Kidney (tissue), 22 donors: ENCODE measurements at regions of chr7 and their contacts with region 1.

Region 1: DNA sequence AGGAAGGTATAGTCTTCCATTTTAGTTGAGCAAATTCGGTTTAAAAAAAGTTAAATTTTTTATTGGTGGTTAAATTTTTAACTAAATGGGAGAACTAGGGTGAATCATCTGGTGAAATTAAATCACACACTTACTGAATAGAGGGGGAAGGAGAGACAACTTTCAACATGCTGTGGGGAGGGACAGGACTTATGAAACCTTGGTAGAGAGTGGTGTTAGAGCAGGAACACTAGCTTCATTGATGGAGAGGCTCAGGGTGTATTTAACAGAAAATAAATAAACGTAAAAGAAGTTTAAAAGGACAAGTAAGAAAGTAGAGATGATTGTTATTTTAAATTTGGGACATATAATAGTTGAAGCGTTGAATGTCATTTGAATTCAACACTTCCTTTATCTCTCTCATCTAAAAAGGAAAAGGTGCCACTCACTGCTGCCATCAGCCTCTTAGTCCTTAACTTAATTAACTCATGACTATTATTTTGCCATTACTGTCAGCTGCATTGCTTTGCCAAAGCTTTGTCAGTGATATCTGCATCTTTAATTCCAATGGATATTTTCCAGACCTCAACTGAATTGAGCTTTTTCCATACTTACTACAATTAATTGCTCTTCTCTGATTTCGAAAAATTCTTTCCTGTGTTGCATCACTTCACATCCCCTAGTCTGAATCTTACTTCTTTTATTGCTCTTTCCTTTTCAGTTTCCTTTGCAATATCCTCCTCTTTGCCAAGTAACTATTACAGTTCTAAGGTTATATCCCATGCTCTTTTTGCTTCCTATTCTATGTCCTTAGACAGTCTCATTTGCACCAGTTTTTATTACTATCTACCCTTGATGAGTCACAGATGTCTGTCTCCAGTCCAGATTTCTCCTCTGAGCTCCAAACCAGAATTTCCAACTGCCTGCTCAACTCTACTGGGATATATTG is 71.7 kb downstream of the GNAT3 start:
- DNase-seq: no peak
- H3K4me3 ChIP-seq: no peak overlapping the region
- H3K27ac ChIP-seq: no peak overlapping the region
- H3K4me1 ChIP-seq: no peaks in the 10 kb centered on the region
- H3K27me3 ChIP-seq: no peaks in the 10 kb centered on the region
- CTCF ChIP-seq: no peak

Region 2: DNA sequence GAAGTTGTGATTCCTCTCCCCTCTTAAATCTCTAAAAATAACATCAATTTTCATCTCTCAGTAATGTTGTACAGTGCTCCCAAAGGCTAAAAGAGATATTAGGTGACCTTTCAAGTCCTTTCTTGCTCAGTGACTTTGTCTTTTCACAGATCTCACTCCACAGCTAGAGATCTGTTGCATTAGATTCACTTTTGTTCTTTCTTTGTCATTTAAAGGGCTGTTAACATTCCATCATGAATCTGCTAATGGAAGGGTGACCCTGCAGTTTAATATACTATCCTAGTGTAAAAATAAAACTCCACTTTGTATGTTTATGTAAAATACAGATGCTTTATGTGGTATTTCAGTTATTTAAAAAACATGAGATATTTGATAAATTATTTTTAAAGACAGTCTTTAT is 275.0 kb before region 1 on chr7:
- intact Hi-C with region 1: no loop called
- DNase-seq: no peak
- H3K4me3 ChIP-seq: no peak overlapping the region
- H3K27ac ChIP-seq: no peak overlapping the region
- H3K4me1 ChIP-seq: peaks cover 0 to 3% (median 0%) of the 10 kb centered on the region in 3 donors
- H3K27me3 ChIP-seq: no peaks in the 10 kb centered on the region
- CTCF ChIP-seq: no peak

Region 3: GRCh38 chr7:80659120-80660055 is 219.2 kb after region 1 on chr7:
- intact Hi-C with region 1: loop called (anchors 10 kb)
- DNase-seq: peak in 2 of 5 donors; percentile 40 to 54
- H3K4me3 ChIP-seq: no peak overlapping the region
- H3K27ac ChIP-seq: no peak overlapping the region
- H3K4me1 ChIP-seq: no peaks in the 10 kb centered on the region
- H3K27me3 ChIP-seq: no peaks in the 10 kb centered on the region
- CTCF ChIP-seq: peak; percentile 60